T-cell (primary cell): ENCODE measurements at regions of chr1 and their contacts with region 1.

Region 1: GRCh38 chr1:19156676-19157075 is 53.4 kb downstream of the UBR4 start:
- DNase-seq: no peak
- ATAC-seq: no peak
- H3K4me3 ChIP-seq: no peak overlapping the region
- H3K4me3 Mint-ChIP-seq: no peak overlapping the region
- H3K27ac ChIP-seq: no peak overlapping the region
- H3K27ac Mint-ChIP-seq: peak overlapping the region in 1 of 2 donors; percentile 39
- H3K4me1 ChIP-seq: no peaks in the 10 kb centered on the region
- H3K4me1 Mint-ChIP-seq: peaks cover 0 to 4% (median 0%) of the 10 kb centered on the region in 3 donors
- H3K27me3 ChIP-seq: no peaks in the 10 kb centered on the region
- H3K27me3 Mint-ChIP-seq: no peaks in the 10 kb centered on the region

Region 2: DNA sequence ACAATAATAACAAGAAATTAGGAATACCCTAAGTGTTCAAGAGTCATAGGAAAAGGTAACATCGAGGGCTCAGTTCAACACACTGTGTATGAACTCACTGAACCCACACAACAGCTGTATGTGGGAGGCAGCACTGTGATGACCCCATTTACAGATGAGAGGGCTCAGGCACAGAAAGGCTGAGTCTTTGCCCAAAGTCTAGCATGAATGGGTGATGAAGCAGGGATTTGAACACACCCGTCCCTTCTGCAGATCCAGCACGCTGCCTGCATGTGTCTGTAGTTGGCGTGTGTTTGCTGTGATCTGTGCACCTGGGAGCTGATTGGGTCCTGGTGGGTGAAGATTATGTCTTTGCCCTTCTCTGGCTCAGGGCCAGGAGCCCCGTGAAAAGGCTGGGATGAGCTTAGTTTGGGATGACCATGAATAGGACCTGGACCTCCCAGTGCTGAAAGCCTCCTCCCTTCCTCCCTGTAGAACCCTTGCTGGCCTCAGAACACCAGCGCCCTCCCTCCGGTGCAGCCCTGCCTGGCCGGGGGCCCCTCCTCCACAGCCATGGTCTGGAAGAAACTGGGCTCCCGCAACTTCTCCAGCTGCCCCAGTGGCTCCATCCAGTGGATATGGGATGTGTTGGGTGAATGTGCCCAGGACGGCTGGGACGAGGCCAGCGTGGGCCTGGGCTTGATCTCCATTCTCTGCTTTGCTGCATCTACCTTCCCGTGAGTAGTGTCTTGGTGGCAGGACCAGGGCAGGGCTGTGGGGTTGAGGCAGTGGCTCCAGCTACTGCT is 160.6 kb after region 1 on chr1:
- CTCF ChIA-PET with region 1: no interaction called
- POLR2A ChIA-PET with region 1: interaction called in 1 of 2 experiments, 12 read pairs
- DNase-seq: no peak
- ATAC-seq: no peak
- H3K4me3 ChIP-seq: no peak overlapping the region
- H3K4me3 Mint-ChIP-seq: no peak overlapping the region
- H3K27ac ChIP-seq: no peak overlapping the region
- H3K27ac Mint-ChIP-seq: no peak overlapping the region
- H3K4me1 ChIP-seq: peaks cover 0 to 22% of the 10 kb centered on the region in 2 experiments
- H3K4me1 Mint-ChIP-seq: peaks cover 19 to 28% (median 23%) of the 10 kb centered on the region in 3 donors
- H3K27me3 ChIP-seq: no peaks in the 10 kb centered on the region
- H3K27me3 Mint-ChIP-seq: no peaks in the 10 kb centered on the region